HEK293 (cell line): ENCODE measurements at regions of chr12 and their contacts with region 1.

Region 1: GRCh38 chr12:115998119-115998633 is 279.3 kb downstream of the MED13L start:
- H3K4me3 ChIP-seq: no peak overlapping the region
- H3K27ac ChIP-seq: no peak overlapping the region
- H3K4me1 ChIP-seq: peaks cover 14% of the 10 kb centered on the region
- CTCF ChIP-seq: no peak

Region 2: DNA sequence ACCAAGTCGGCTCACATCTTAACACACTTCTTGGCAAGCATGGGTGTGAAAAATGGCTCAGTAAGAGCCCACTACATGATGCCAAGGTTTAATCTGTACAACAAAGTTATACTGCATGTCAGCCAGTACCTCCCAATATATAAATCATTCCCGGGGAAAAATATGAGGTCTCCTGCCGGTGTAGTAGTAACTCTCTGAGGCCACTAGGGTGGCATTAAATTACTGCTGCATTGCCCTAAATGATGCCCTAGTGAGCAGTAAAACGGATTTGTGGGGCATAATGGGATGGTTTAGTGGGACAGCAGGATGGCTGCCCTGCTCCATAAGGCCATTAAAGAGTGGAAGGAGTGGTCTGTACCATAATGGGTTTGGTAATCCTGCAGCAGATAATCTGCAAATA is 11.6 kb after region 1 on chr12:
- CTCF ChIA-PET with region 1: interaction called, 10 read pairs
- POLR2A ChIA-PET with region 1: no interaction called
- H3K4me3 ChIP-seq: no peak overlapping the region
- H3K27ac ChIP-seq: no peak overlapping the region
- H3K4me1 ChIP-seq: no peaks in the 10 kb centered on the region
- CTCF ChIP-seq: no peak

Region 3: DNA sequence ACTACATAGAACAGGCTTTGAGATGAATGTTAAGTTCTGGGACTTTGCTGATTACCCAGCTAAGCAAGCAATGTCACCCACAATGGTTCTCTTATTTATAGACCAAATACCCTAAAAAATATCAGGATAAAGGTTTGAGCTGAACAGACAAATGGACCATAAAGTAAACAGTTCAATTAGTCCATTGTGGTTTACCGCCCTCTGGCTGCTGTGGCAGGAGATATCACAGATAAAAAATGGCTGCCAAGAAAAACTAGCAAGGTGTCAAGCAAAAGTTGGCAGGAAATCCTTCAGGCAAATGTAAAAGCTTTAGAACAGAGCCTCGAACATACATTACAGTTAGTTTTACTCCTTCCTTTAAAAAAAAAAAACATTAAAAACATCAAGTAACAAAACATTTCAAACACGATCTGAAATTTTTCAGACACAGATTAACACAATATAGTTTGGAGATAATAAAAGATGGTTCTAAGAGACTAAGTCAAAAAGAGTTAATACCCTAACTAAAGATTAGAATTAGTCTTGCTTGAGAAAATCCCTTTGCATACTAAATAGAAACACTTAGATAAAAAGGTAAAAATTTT is 238.1 kb after region 1 on chr12:
- CTCF ChIA-PET with region 1: interaction called, 12 read pairs
- POLR2A ChIA-PET with region 1: no interaction called
- H3K4me3 ChIP-seq: no peak overlapping the region
- H3K27ac ChIP-seq: no peak overlapping the region
- H3K4me1 ChIP-seq: peaks cover 31% of the 10 kb centered on the region
- CTCF ChIP-seq: no peak; the same call in 1 of the 2 replicates

Region 4: DNA sequence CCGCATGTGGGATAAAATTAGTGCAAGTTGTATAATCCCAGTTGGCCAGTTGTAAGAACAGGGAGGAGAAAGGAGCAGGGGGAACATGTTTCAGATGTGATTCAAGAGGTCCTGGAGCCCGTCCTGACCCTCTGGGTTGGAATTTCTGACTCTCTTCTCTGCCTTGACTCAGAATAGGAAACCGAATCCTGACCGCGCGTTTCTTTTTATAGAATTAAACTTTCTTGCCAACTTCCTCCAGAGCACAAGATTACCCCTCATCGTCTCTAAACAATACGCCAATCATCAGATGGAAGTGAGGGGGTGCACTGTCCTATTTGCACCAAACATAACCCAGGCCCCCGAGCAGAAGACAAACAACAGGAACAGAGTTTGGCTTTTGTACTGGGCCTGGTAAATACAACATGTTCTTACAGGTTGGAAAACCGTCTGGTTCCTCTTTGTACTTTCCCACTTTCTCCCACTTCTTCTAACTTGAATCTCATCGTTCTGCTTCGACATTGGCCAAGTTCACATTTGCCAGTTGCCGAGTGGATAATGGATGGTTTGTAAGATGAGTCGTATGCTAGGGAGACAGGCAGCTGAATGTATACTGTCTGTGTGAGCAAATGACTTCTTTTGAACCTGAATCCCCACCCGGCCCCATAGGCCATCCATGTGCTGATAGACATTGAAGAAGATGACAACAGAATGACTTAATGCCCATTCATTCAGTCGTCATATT is 321.9 kb after region 1 on chr12:
- CTCF ChIA-PET with region 1: no interaction called
- POLR2A ChIA-PET with region 1: no interaction called
- H3K4me3 ChIP-seq: no peak overlapping the region
- H3K27ac ChIP-seq: no peak overlapping the region
- H3K4me1 ChIP-seq: no peaks in the 10 kb centered on the region
- CTCF ChIP-seq: no peak

Region 5: GRCh38 chr12:116609319-116610114 is 611.3 kb after region 1 on chr12:
- CTCF ChIA-PET with region 1: interaction called, 10 read pairs
- POLR2A ChIA-PET with region 1: no interaction called
- H3K4me3 ChIP-seq: no peak overlapping the region
- H3K27ac ChIP-seq: no peak overlapping the region
- H3K4me1 ChIP-seq: no peaks in the 10 kb centered on the region
- CTCF ChIP-seq: peak; percentile 20; the same call in 1 of the 2 replicates